GM10248 (cell line): ENCODE measurements at regions of chr18 and their contacts with region 1.

Region 1: GRCh38 chr18:23918401-23919032 is 96.0 kb upstream of the TTC39C start:
- DNase-seq: peak; percentile 61
- CTCF ChIP-seq: peak; percentile 81

Region 2: GRCh38 chr18:23887493-23887892 is 31.0 kb before region 1 on chr18:
- CTCF ChIA-PET with region 1: interaction called, 14 read pairs
- POLR2A ChIA-PET with region 1: no interaction called
- DNase-seq: no peak
- CTCF ChIP-seq: no peak

Region 3: GRCh38 chr18:23900994-23901393 is 17.5 kb before region 1 on chr18:
- CTCF ChIA-PET with region 1: interaction called, 14 read pairs
- POLR2A ChIA-PET with region 1: no interaction called
- DNase-seq: no peak
- CTCF ChIP-seq: no peak

Region 4: GRCh38 chr18:23938043-23938756 is 19.7 kb after region 1 on chr18:
- CTCF ChIA-PET with region 1: interaction called, 26 read pairs
- POLR2A ChIA-PET with region 1: no interaction called
- DNase-seq: peak; percentile 42
- CTCF ChIP-seq: no peak

Region 5: GRCh38 chr18:23967321-23968089 is 49.0 kb after region 1 on chr18:
- CTCF ChIA-PET with region 1: interaction called, 11 read pairs
- POLR2A ChIA-PET with region 1: no interaction called
- DNase-seq: no peak
- CTCF ChIP-seq: no peak

Region 6: GRCh38 chr18:24315170-24315569 is 396.7 kb after region 1 on chr18:
- CTCF ChIA-PET with region 1: no interaction called
- POLR2A ChIA-PET with region 1: no interaction called
- DNase-seq: no peak
- CTCF ChIP-seq: no peak